ENCODE measurements at regions of chrX and their contacts with region 1.

Region 1: GRCh38 chrX:103214870-103215424 is at the start of gene BEX4:
- DNase-seq: peak; percentile 62 to 84 (median 78)
- ATAC-seq: peak; percentile 97
- H3K4me3 ChIP-seq: peak within 1 kb of the TSS; percentile 61
- H3K4me3 Mint-ChIP-seq: peak within 1 kb of the TSS; percentile 72 to 91 (median 84)
- H3K27ac ChIP-seq: peak within 1 kb of the TSS; percentile 97
- H3K27ac Mint-ChIP-seq: peak within 1 kb of the TSS; percentile 75 to 96 (median 91)
- H3K4me1 ChIP-seq: no peaks in the 10 kb centered on the region
- H3K4me1 Mint-ChIP-seq: peaks cover 3 to 20% (median 12%) of the 10 kb centered on the region in 7 donors
- H3K27me3 ChIP-seq: no peaks in the 10 kb centered on the region
- H3K27me3 Mint-ChIP-seq: peaks cover 0 to 9% (median 0%) of the 10 kb centered on the region in 5 donors
- total RNA-seq, gene BEX4: 8.8 to 51.2 (median 41.1) TPM

Region 2: DNA sequence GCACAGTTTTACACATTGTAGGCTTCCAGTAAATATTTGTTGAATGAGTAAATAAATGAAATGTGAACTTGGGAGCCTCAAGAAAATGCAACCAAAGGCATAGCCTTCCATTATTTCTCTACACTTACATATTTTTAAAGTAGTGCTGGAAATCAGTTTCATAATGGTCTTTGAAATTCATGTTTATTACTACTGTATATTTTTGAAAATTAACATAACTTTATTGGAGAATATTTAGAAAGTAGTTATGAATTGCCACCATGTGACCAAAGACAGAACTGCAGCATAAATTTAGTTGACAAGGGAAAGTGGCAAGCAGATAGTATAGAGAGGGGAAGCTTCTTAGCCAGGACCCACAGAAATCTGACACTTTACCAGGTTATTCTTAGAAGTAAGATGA is 33.6 kb after region 1 on chrX:
- CTCF ChIA-PET with region 1: no interaction called
- POLR2A ChIA-PET with region 1: interaction called, 3 read pairs
- intact Hi-C with region 1: loop called (anchors 1 kb)
- DNase-seq: peak in 4 of 9 donors; percentile 8 to 27 (median 14)
- ATAC-seq: no peak
- H3K4me3 ChIP-seq: no peak overlapping the region
- H3K4me3 Mint-ChIP-seq: no peak overlapping the region
- H3K27ac ChIP-seq: no peak overlapping the region
- H3K27ac Mint-ChIP-seq: no peak overlapping the region
- H3K4me1 ChIP-seq: no peaks in the 10 kb centered on the region
- H3K4me1 Mint-ChIP-seq: peaks cover 3 to 16% (median 4%) of the 10 kb centered on the region in 7 donors
- H3K27me3 ChIP-seq: no peaks in the 10 kb centered on the region
- H3K27me3 Mint-ChIP-seq: peaks cover 0 to 12% (median 0%) of the 10 kb centered on the region in 5 donors

Region 3: GRCh38 chrX:103254921-103255493 is 40.1 kb after region 1 on chrX and contains the start of gene TCEAL8:
- CTCF ChIA-PET with region 1: no interaction called
- POLR2A ChIA-PET with region 1: interaction called, 3 read pairs
- intact Hi-C with region 1: loop called (anchors 1 to 2 kb)
- DNase-seq: peak in 8 of 9 donors; percentile 28 to 66 (median 47)
- ATAC-seq: peak; percentile 94
- H3K4me3 ChIP-seq: peak within 1 kb of the TSS; percentile 85
- H3K4me3 Mint-ChIP-seq: peak within 1 kb of the TSS; percentile 92 to 98 (median 96)
- H3K27ac ChIP-seq: peak within 1 kb of the TSS; percentile 85
- H3K27ac Mint-ChIP-seq: peak within 1 kb of the TSS; percentile 87 to 97 (median 94)
- H3K4me1 ChIP-seq: no peaks in the 10 kb centered on the region
- H3K4me1 Mint-ChIP-seq: peaks cover 12 to 33% (median 20%) of the 10 kb centered on the region in 7 donors
- H3K27me3 ChIP-seq: no peaks in the 10 kb centered on the region
- H3K27me3 Mint-ChIP-seq: peaks cover 0 to 11% (median 0%) of the 10 kb centered on the region in 5 donors
- total RNA-seq, gene TCEAL8: 12.2 to 35.0 (median 33.2) TPM

Region 4: DNA sequence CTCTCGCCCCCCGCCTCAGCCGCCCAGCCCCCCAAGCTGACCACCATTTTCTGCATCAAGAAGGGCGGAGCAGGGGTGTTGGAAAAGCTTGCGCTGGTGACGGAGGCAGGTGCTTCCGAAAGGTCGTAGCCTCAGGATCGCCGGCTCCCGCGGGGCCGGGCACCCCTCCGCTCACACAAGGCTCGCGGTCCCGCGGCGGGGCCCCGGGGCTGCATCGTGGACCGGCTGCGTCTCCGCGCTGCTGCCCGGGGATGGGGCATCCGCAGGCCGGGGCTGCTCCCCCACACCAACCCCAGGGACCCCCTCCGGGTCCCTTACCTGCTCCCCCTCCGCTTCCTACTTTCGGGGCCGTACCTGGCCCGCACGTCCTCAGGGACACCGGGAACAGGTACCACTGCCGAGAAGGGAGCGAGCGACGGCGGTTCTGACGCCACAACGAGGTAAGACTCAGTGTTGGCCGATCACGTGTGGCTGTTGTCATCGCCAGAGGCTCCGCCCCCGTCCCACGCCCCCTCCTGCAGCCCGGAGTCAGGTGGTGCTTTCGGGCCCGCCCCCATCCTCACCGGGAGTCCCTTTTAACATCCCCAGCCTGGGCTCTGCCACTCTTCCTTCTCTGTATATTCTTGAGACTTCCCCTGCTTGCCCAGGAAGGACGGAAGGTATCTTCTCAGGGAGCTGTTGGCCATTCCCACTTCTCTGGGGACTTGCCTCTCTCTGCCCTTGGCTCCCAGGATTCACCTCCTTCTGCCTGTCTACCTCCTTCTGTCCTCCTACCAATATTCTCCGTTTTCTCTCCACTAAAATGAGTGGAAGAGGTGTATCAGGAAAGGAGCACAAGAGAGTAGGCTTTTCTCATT is 95.8 kb after region 1 on chrX and contains the start of gene BEX2:
- CTCF ChIA-PET with region 1: no interaction called
- POLR2A ChIA-PET with region 1: no interaction called
- intact Hi-C with region 1: loop called (anchors 1 to 2 kb)
- DNase-seq: peak; percentile 64 to 87 (median 83)
- ATAC-seq: peak; percentile 100
- H3K4me3 ChIP-seq: peak within 1 kb of the TSS; percentile 78
- H3K4me3 Mint-ChIP-seq: peak within 1 kb of the TSS; percentile 69 to 89 (median 81)
- H3K27ac ChIP-seq: peak within 1 kb of the TSS; percentile 87
- H3K27ac Mint-ChIP-seq: peak within 1 kb of the TSS; percentile 49 to 92 (median 82)
- H3K4me1 ChIP-seq: no peaks in the 10 kb centered on the region
- H3K4me1 Mint-ChIP-seq: peaks cover 0 to 8% (median 6%) of the 10 kb centered on the region in 7 donors
- H3K27me3 ChIP-seq: no peaks in the 10 kb centered on the region
- H3K27me3 Mint-ChIP-seq: no peaks in the 10 kb centered on the region
- total RNA-seq, gene BEX2: 4.8 to 48.5 (median 42.1) TPM

Region 5: DNA sequence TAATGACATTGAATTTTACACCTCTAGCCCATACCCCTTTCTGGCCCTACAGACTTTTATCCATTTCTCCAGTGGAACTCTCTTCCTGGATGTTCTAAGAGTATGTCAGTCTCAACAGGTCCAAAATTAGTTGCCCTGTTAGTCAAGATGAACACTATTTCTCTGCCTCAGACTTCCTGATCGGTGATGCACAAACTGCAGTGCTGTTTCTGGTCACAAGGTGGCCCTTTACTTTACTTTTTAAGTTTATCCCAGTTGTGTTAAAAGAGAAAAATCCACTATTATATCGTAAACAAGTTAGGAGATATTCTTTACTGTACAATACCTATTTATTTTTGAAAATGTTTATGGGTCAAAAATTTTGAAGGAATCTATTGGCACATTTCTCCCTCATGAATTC is 128.2 kb after region 1 on chrX:
- CTCF ChIA-PET with region 1: no interaction called
- POLR2A ChIA-PET with region 1: no interaction called
- intact Hi-C with region 1: loop called in 1 of 2 experiments (anchors 1 kb)
- DNase-seq: peak in 7 of 9 donors; percentile 7 to 55 (median 33)
- ATAC-seq: peak; percentile 46
- H3K4me3 ChIP-seq: no peak overlapping the region
- H3K4me3 Mint-ChIP-seq: no peak overlapping the region
- H3K27ac ChIP-seq: no peak overlapping the region
- H3K27ac Mint-ChIP-seq: peak overlapping the region in 2 of 9 donors; percentile 13 to 23
- H3K4me1 ChIP-seq: no peaks in the 10 kb centered on the region
- H3K4me1 Mint-ChIP-seq: peaks cover 0 to 5% (median 4%) of the 10 kb centered on the region in 7 donors
- H3K27me3 ChIP-seq: no peaks in the 10 kb centered on the region
- H3K27me3 Mint-ChIP-seq: peaks cover 0 to 8% (median 0%) of the 10 kb centered on the region in 5 donors

Region 6: GRCh38 chrX:103488794-103489193 is 273.8 kb after region 1 on chrX:
- CTCF ChIA-PET with region 1: interaction called, 14 read pairs
- POLR2A ChIA-PET with region 1: interaction called, 4 read pairs
- intact Hi-C with region 1: loop called (anchors 1 kb)
- DNase-seq: no peak
- ATAC-seq: no peak
- H3K4me3 ChIP-seq: no peak overlapping the region
- H3K4me3 Mint-ChIP-seq: no peak overlapping the region
- H3K27ac ChIP-seq: no peak overlapping the region
- H3K27ac Mint-ChIP-seq: no peak overlapping the region
- H3K4me1 ChIP-seq: no peaks in the 10 kb centered on the region
- H3K4me1 Mint-ChIP-seq: peaks cover 0 to 3% (median 0%) of the 10 kb centered on the region in 7 donors
- H3K27me3 ChIP-seq: no peaks in the 10 kb centered on the region
- H3K27me3 Mint-ChIP-seq: peaks cover 0 to 6% (median 3%) of the 10 kb centered on the region in 5 donors

Region 7: DNA sequence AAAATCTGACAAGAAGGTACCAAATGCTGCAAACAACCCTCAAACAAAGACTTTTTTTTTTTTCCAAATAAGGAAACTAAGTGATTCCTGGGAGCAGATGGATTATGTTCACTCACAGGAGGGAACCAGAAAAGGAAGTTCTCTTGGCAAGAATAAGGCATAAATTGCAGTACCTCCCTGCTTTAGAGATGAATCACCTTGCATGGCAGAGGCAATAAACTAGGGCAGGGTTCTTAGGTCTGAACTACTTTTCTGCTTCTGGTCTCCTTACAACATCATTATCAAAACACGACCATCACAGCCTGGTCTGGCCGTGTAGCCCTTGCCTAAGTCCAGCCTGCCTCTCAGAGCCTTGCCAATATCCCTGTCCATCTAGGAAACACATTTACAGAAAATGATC is 502.0 kb after region 1 on chrX:
- CTCF ChIA-PET with region 1: no interaction called
- POLR2A ChIA-PET with region 1: no interaction called
- intact Hi-C with region 1: no loop called
- DNase-seq: no peak
- ATAC-seq: no peak
- H3K4me3 ChIP-seq: no peak overlapping the region
- H3K4me3 Mint-ChIP-seq: no peak overlapping the region
- H3K27ac ChIP-seq: no peak overlapping the region
- H3K27ac Mint-ChIP-seq: no peak overlapping the region
- H3K4me1 ChIP-seq: no peaks in the 10 kb centered on the region
- H3K4me1 Mint-ChIP-seq: no peaks in the 10 kb centered on the region
- H3K27me3 ChIP-seq: no peaks in the 10 kb centered on the region
- H3K27me3 Mint-ChIP-seq: no peaks in the 10 kb centered on the region